GM18951 (cell line): ENCODE measurements at regions of chr3 and their contacts with region 1.

Region 1: GRCh38 chr3:21484057-21484827 is 266.8 kb downstream of the ZNF385D start:
- POLR2A ChIP-seq: no peak

Region 2: DNA sequence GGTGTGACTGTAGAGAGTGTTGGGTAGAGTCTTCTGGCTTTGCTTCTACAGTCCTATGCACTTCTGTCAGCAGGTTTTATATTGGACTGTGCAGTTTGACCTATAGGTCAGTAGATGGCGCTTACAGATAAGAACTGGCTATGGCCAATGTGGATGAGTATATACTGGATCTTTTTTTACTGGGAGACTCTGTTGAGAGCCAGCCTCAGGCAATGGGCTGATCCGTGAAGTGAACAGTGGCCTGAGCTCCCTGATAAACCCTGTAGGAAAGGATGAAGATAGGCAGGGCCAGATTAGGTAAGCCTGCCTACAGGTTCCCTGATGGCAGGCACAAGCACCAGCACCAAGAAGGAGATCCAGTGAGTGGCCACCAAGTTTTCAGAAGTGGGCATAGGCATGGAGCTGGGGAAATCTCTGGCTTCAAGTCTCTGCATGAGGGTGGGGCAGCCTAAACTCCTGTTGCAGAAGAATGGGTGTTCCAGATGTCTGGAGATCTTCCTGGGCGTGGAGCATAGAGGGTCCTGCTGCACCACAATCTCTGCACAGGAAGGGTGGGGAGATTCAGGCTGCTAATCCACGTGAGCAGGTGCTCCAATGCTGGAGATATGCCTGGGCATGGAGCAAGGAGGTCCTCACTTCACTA is 972.3 kb before region 1 on chr3:
- in situ Hi-C with region 1: loop called (anchors 25 kb)
- POLR2A ChIP-seq: no peak